HepG2 (cell line): ENCODE measurements at regions of chr4 and their contacts with region 1.

Region 1: DNA sequence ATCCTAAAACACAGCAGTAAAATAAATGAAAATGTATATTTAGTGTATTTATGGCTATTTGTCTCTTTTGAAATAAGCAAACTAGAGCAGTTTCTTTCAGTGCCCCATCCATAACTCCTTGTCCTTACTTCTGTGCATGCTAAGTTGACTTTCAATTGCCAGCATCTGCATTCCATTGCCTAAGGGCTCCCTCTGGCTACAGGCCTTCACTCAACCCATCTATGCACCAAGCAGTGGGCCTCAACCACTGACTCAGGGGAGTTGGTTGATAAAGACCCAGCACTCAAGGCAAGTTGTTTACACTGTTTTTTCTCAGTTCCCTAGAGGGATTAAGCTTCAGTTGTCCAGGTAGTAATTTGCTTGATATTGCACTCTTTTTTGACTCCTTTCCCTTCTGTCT is 265.7 kb downstream of the IQCM start:
- DNase-seq: no peak
- ATAC-seq: no peak
- H3K4me3 ChIP-seq: no peak overlapping the region
- H3K27ac ChIP-seq: no peak overlapping the region
- H3K4me1 ChIP-seq: no peaks in the 10 kb centered on the region
- H3K27me3 ChIP-seq: no peaks in the 10 kb centered on the region; a peak in 1 of 5 replicates
- CTCF ChIP-seq: no peak
- EP300 ChIP-seq: no peak
- POLR2A ChIP-seq: no peak
- RAD21 ChIP-seq: no peak

Region 2: DNA sequence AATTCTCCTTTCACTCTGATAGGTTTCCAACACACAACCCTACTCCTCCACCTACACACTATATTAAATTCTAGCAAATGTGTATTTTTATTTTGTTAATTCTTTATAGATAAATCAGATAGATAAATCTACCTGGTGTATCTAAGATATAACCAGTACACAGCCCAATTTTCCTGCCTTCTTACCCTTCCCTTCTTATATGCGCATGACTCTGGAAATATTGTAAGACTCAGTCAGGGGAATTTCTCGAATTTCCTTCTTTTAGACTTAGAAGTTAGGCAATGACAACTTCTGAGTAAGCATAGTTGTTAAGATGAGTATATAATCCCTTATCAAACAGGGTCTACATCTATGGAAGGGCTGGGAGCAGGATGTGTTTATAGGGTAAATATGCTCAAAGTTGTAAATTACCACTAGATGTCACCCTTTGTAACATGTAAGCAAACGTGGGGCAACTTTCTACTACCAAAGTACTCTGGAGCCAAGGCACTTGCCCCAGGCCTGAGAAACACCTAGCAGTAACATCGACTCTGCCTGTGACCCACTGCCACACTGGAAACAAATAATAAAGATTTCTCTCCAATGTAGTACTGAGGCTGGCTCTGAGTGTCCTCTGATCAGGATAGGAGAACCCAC is 179.0 kb before region 1 on chr4:
- CTCF ChIA-PET with region 1: no interaction called
- POLR2A ChIA-PET with region 1: no interaction called
- in situ Hi-C with region 1: no loop called
- intact Hi-C with region 1: loop called (anchors 5 kb)
- DNase-seq: peak; percentile 34
- ATAC-seq: peak; percentile 80
- H3K4me3 ChIP-seq: no peak overlapping the region
- H3K27ac ChIP-seq: no peak overlapping the region
- H3K4me1 ChIP-seq: no peaks in the 10 kb centered on the region
- H3K27me3 ChIP-seq: no peaks in the 10 kb centered on the region
- CTCF ChIP-seq: peak; percentile 47
- EP300 ChIP-seq: no peak
- POLR2A ChIP-seq: no peak
- RAD21 ChIP-seq: no peak

Region 3: GRCh38 chr4:149409146-149409545 is 140.8 kb before region 1 on chr4:
- CTCF ChIA-PET with region 1: no interaction called
- POLR2A ChIA-PET with region 1: no interaction called
- in situ Hi-C with region 1: no loop called
- intact Hi-C with region 1: no loop called
- DNase-seq: no peak
- ATAC-seq: no peak
- H3K4me3 ChIP-seq: no peak overlapping the region
- H3K27ac ChIP-seq: no peak overlapping the region
- H3K4me1 ChIP-seq: no peaks in the 10 kb centered on the region
- H3K27me3 ChIP-seq: no peaks in the 10 kb centered on the region
- CTCF ChIP-seq: no peak
- EP300 ChIP-seq: no peak
- POLR2A ChIP-seq: no peak
- RAD21 ChIP-seq: no peak